GM10248 (cell line): ENCODE measurements at regions of chr9 and their contacts with region 1.

Region 1: GRCh38 chr9:33852216-33852826 is 35.4 kb downstream of the UBE2R2 start:
- DNase-seq: peak; percentile 37
- CTCF ChIP-seq: peak; percentile 61

Region 2: DNA sequence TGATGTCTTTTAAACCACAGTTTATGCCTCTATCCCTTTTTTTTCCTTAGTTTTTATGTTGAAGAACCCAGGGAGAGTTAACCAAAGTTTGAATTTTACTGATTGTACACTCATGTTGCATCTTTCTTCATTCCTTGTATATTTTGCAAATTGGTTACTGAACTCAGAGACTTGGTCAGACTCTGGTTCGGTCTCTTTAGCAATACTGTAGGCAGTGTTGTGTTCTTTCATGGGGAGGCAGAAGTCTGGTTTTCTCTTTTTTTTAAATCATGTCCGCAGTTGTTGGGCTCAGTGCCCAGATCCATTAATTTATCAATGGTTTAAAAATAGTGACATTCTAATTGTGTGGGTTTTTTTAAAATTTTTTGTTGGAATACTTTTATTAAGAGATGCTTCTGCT is 11.9 kb before region 1 on chr9:
- CTCF ChIA-PET with region 1: interaction called, 12 read pairs
- POLR2A ChIA-PET with region 1: interaction called, 7 read pairs
- DNase-seq: no peak
- CTCF ChIP-seq: no peak

Region 3: GRCh38 chr9:34035656-34036055 is 183.3 kb after region 1 on chr9:
- CTCF ChIA-PET with region 1: no interaction called
- POLR2A ChIA-PET with region 1: no interaction called
- DNase-seq: no peak
- CTCF ChIP-seq: no peak

Region 4: GRCh38 chr9:34114436-34114835 is 262.1 kb after region 1 on chr9:
- CTCF ChIA-PET with region 1: no interaction called
- POLR2A ChIA-PET with region 1: no interaction called
- DNase-seq: no peak
- CTCF ChIP-seq: no peak